ENCODE measurements at regions of chr1 and their contacts with region 1.

Region 1: DNA sequence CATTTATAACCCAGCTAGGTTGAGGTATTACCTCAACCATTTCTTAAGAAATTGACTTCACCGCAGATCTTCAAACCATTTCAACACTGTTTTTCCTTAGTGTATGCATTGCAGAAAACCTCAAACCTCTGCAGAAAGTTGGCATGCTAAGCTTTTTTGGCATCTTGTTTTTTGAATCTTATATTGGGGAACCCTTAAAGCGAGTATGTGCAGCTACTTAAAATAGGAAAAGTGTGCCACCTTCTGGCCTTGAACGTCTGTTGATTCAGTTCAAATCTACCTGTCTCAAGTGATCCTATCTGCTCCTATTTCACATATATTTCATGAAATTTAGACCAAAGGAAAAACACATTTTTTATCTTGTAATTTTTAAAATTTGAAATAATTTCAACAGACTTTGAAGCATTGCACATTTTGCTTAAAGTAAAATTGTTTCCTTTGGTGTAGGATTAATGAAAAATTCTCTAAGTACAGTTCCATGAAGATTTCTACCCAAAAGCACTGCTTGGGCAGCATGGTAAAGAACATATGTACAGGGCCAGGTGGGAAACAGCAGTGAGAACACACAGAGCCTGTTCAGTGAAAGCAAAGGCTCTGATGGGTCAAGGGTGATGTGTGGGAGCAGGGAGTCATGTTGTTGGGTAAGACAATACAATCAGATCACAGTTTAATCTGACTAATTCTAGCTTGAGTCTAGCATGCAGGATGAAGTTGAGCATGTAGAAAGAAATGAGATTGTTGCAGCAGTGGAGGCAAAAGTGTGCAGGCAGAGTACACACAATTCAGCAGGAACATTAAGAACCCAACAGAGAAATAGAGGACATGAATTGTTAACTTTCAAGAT is 17.2 kb downstream of the HENMT1 start:
- DNase-seq: no peak
- ATAC-seq: peak; percentile 27 to 66
- H3K4me3 ChIP-seq: no peak overlapping the region
- H3K27ac ChIP-seq: no peak overlapping the region
- H3K4me1 ChIP-seq: peaks cover 35% of the 10 kb centered on the region
- H3K27me3 ChIP-seq: no peaks in the 10 kb centered on the region
- CTCF ChIP-seq: peak; percentile 69

Region 2: GRCh38 chr1:108512239-108512981 is 131.3 kb before region 1 on chr1:
- intact Hi-C with region 1: loop called (anchors 2 kb)
- DNase-seq: no peak
- ATAC-seq: peak in 1 of 2 donors; percentile 61
- H3K4me3 ChIP-seq: no peak overlapping the region
- H3K27ac ChIP-seq: no peak overlapping the region
- H3K4me1 ChIP-seq: no peaks in the 10 kb centered on the region
- H3K27me3 ChIP-seq: no peaks in the 10 kb centered on the region
- CTCF ChIP-seq: peak; percentile 88

Region 3: DNA sequence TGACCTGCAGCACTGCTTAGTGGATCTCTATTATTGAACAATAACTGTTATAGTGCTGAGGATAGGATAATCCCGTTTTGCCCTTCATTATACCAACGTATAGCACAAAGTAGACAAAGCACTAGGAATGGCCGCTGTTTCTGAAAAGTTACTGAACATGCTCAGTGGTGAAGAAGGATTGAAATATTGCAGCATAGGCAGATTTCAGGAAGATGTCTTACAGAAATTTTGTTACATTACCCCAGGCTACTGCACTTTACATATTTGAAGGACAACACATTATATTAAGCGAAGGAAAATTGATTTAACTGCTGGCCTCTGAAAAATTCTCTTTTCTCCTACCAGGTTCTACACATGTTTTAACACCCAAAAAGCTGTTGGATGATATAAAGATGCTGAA is 164.7 kb after region 1 on chr1:
- intact Hi-C with region 1: no loop called
- DNase-seq: no peak
- ATAC-seq: no peak
- H3K4me3 ChIP-seq: no peak overlapping the region
- H3K27ac ChIP-seq: no peak overlapping the region
- H3K4me1 ChIP-seq: no peaks in the 10 kb centered on the region
- H3K27me3 ChIP-seq: no peaks in the 10 kb centered on the region
- CTCF ChIP-seq: no peak

Measured in lower lobe of right lung (tissue), 2 donors.